ENCODE measurements at regions of chr19 and their contacts with region 1.

Region 1: DNA sequence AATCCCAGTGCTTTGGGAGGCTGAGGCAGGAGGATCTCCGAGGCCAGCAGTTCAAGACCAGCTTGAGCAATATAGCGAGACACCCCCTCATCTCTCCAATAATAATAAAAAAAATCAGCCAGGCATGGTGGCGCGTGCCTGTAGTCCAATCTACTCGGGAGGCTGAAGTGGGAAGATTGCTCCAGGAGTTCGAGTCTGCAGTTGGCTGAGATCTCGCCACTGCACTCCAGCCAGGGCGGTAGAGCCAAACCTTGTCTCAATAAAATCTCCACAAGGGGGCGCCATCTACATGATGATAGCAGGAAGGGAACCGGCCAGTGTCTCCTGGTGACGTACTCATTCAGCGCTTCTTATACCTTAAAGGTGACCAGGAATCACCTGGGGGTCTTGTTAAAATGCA is 13.6 kb upstream of the C5AR1 start:
- DNase-seq: no peak

Region 2: GRCh38 chr19:46346821-46347571 is 949.0 kb before region 1 on chr19 and contains the start of gene PPP5C:
- intact Hi-C with region 1: no loop called
- DNase-seq: peak; percentile 97
- total RNA-seq, gene PPP5C: 44.3 to 46.8 TPM

Region 3: GRCh38 chr19:47391510-47392223 is 95.6 kb after region 1 on chr19:
- intact Hi-C with region 1: loop called in 1 of 2 experiments (anchors 5 kb)
- DNase-seq: peak; percentile 94

Region 4: GRCh38 chr19:47428177-47428894 is 132.3 kb after region 1 on chr19:
- intact Hi-C with region 1: loop called in 1 of 2 experiments (anchors 10 kb)
- DNase-seq: peak; percentile 94

Region 5: DNA sequence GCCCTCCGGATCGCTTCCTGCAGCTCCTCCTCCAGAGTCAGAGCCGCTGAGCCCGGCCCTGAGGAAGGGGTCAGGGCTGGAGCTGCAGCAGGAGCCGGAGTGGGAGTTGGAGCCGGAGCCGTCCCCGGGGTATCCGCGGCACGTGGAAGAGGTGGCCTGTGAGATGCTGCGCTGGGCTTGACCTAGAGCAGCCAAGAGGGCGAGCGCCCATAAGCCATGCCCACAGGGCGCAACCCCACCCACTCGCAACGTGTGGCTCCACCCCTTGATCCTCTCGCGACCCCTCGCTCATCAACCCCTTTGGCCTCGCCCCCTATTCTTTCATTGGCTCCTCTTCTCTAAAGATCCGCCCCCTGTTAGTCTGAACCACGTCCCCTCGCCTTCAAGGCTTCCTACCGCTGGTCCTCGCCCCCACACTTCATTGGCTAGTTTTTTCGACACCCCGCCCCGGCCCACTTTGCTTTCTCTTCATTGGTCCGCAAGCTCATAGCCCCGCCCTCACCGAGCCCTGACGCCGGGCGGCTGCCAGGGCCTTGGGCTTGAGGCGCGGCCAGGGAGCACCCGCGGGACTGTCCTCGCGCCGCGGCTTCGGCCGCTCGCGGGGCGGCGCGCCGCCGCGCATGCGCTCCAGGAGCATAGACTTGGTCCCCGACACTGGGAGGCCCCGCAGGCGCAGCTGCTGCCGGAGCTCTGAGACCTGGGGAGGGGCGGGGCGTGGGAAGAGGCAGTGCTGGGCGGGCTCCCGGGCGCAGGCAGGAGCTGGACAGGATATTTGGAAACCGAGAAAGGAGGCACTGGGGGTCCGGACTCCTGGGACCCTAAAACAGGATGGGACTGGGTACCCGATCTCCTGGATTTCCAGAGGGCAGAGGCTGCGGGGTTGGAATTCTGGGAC is 1418.1 kb after region 1 on chr19:
- intact Hi-C with region 1: no loop called
- DNase-seq: peak; percentile 99

Measured in posterior vena cava (tissue), 2 donors.